Heart right ventricle (tissue), 16 donors: ENCODE measurements at regions of chr6 and their contacts with region 1.

Region 1: GRCh38 chr6:7051233-7052114 is 56.3 kb upstream of the RREB1 start:
- DNase-seq: peak; percentile 38 to 64
- ATAC-seq: peak; percentile 58 to 86 (median 78)
- H3K4me3 ChIP-seq: peak overlapping the region; percentile 44 to 76 (median 67)
- H3K27ac ChIP-seq: peak overlapping the region in 9 of 10 donors; percentile 54 to 92 (median 74)
- H3K4me1 ChIP-seq: peaks cover 0 to 50% (median 21%) of the 10 kb centered on the region in 9 donors
- H3K27me3 ChIP-seq: peaks cover 0 to 6% (median 0%) of the 10 kb centered on the region in 7 donors
- CTCF ChIP-seq: no peak

Region 2: DNA sequence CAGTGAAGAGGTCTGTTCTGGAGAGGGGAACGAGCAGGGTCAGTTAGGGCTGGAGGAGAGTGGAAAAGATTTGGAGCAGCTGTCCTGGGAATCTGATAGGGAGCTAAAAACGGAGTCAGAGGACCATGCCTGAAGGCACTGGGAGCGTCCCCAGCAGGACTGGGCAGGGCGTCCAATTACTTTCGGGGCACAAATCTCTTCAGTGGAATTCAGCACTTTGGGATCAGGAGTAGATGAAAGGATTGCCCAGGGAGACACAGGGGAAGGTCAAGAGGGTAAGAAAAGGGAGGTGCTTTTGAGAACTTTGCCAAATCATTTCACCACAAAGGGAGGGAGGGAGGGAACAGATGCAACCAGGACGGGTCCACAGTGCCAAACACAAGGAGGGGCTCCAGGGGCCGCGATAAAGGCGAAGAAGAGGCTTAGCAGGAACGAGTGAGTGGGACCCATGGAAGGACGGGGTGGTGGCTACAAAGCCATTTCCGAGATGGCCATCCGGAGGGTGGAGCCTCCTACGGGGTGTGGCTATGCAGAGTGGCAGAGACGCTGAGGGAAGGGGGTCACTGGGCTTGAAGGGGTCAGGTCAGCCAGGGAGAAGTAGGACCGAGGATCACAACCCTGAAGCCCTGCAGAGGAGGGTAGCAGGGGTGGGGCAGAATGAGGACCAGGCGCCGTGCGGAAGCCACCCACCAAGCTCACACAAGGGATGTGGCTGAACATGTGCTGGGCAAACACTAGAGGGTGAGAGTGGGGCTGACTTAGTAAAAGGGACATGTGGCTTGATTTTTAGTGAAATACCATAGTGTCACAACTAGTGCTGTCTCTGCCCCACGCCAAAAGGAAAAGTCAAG is 123.7 kb before region 1 on chr6:
- intact Hi-C with region 1: loop called in 1 of 10 experiments (anchors 5 kb)
- DNase-seq: peak; percentile 45 to 52
- ATAC-seq: peak; percentile 77 to 94 (median 89)
- H3K4me3 ChIP-seq: peak overlapping the region in 8 of 10 donors; percentile 26 to 54 (median 46)
- H3K27ac ChIP-seq: peak overlapping the region; percentile 22 to 84 (median 76)
- H3K4me1 ChIP-seq: peaks cover 0 to 27% (median 0%) of the 10 kb centered on the region in 9 donors
- H3K27me3 ChIP-seq: no peaks in the 10 kb centered on the region
- CTCF ChIP-seq: peak in 4 of 9 donors; percentile 35 to 46 (median 38)

Region 3: GRCh38 chr6:6975459-6976111 is 75.9 kb before region 1 on chr6:
- intact Hi-C with region 1: loop called in 1 of 10 experiments (anchors 5 kb)
- DNase-seq: peak in 1 of 2 donors; percentile 69
- ATAC-seq: peak; percentile 79 to 95 (median 90)
- H3K4me3 ChIP-seq: no peak overlapping the region
- H3K27ac ChIP-seq: peak overlapping the region; percentile 24 to 79 (median 69)
- H3K4me1 ChIP-seq: peaks cover 0 to 19% (median 13%) of the 10 kb centered on the region in 9 donors
- H3K27me3 ChIP-seq: no peaks in the 10 kb centered on the region
- CTCF ChIP-seq: no peak

Region 4: GRCh38 chr6:7086488-7086887 is 35.0 kb after region 1 on chr6:
- intact Hi-C with region 1: loop called in 1 of 10 experiments (anchors 2 kb)
- DNase-seq: peak in 1 of 2 donors; percentile 22
- ATAC-seq: peak in 7 of 8 donors; percentile 75 to 88 (median 85)
- H3K4me3 ChIP-seq: peak overlapping the region in 9 of 10 donors; percentile 2 to 47 (median 40)
- H3K27ac ChIP-seq: peak overlapping the region in 5 of 10 donors; percentile 6 to 59 (median 27)
- H3K4me1 ChIP-seq: peaks cover 0 to 29% (median 9%) of the 10 kb centered on the region in 9 donors
- H3K27me3 ChIP-seq: no peaks in the 10 kb centered on the region
- CTCF ChIP-seq: peak in 5 of 9 donors; percentile 12 to 42 (median 32)